Heart right ventricle (tissue), 16 donors: ENCODE measurements at regions of chr9 and their contacts with region 1.

Region 1: GRCh38 chr9:128523199-128523925 is 18.8 kb downstream of the GLE1 start:
- DNase-seq: peak in 1 of 2 donors; percentile 41
- ATAC-seq: peak in 7 of 8 donors; percentile 22 to 65 (median 42)
- H3K4me3 ChIP-seq: no peak overlapping the region
- H3K27ac ChIP-seq: peak overlapping the region in 4 of 10 donors; percentile 6 to 31 (median 18)
- H3K4me1 ChIP-seq: peaks cover 0 to 12% (median 7%) of the 10 kb centered on the region in 9 donors
- H3K27me3 ChIP-seq: no peaks in the 10 kb centered on the region
- CTCF ChIP-seq: no peak

Region 2: GRCh38 chr9:128470560-128470959 is 52.8 kb before region 1 on chr9:
- intact Hi-C with region 1: loop called in 1 of 10 experiments (anchors 10 kb)
- DNase-seq: no peak
- ATAC-seq: peak in 1 of 8 donors; percentile 35
- H3K4me3 ChIP-seq: no peak overlapping the region
- H3K27ac ChIP-seq: no peak overlapping the region
- H3K4me1 ChIP-seq: peaks cover 0 to 3% (median 0%) of the 10 kb centered on the region in 9 donors
- H3K27me3 ChIP-seq: no peaks in the 10 kb centered on the region
- CTCF ChIP-seq: no peak

Region 3: DNA sequence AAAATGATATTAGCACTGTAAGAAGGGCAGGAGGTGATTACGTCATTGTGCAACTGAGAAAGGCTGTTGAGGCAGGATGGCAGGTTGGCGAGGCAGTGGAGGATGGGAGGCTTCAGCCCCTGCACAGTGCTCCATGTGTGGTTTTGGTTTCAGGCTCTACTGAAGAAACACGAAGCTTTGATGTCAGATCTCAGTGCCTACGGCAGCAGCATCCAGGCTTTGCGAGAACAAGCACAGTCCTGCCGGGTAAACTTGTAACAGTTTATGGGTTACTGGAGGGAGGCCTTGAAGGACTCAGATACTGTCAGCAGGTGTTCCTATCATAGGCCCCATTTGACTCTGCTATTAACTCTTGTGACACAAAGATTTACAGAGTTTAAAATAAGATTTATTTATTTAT is 64.1 kb after region 1 on chr9:
- intact Hi-C with region 1: loop called in 1 of 10 experiments (anchors 10 kb)
- DNase-seq: no peak
- ATAC-seq: no peak
- H3K4me3 ChIP-seq: no peak overlapping the region
- H3K27ac ChIP-seq: no peak overlapping the region
- H3K4me1 ChIP-seq: no peaks in the 10 kb centered on the region
- H3K27me3 ChIP-seq: no peaks in the 10 kb centered on the region
- CTCF ChIP-seq: no peak